Activated CD8-positive, alpha-beta T cell treated with anti-CD3 and anti-CD28 coated beads for 36 hours (primary cell): ENCODE measurements at regions of chr15 and their contacts with region 1.

Region 1: DNA sequence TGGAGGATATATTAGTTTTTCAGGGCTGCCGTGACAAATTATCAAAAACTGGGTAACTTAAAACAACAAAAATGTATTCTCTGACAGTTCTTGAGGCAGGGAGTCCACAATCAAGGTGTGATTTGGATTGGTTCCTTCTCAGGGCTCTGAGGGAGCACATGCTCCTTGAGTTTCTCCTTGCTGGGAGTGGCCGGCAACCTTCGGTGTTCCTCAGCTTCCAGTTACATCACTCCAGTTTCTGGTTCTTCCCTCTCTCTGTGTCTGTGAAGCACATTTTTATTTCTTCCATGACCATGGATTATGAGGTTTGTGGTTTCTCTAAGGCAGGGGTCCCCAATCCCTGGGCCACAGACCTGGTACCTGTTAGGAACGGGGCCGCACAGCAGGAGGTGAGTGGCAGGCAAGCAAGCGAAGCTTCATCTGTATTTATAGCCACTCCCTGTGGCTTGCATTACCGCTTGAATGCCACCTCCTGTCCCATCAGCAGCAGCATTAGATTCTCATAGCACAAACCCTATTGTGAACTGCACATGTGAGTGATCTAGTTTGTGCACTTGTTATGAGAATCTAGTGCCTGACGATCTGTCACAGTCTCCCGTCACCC is 24.3 kb downstream of the LRRC28 start:
- DNase-seq: no peak
- ATAC-seq: no peak
- H3K4me3 Mint-ChIP-seq: no peak overlapping the region
- H3K27ac Mint-ChIP-seq: no peak overlapping the region
- H3K4me1 Mint-ChIP-seq: peaks cover 21% of the 10 kb centered on the region
- H3K27me3 Mint-ChIP-seq: no peaks in the 10 kb centered on the region
- CTCF ChIP-seq: no peak

Region 2: GRCh38 chr15:99029341-99030144 is 246.1 kb before region 1 on chr15:
- CTCF ChIA-PET with region 1: no interaction called
- POLR2A ChIA-PET with region 1: no interaction called
- intact Hi-C with region 1: no loop called
- DNase-seq: no peak
- ATAC-seq: no peak
- H3K4me3 Mint-ChIP-seq: no peak overlapping the region
- H3K27ac Mint-ChIP-seq: no peak overlapping the region
- H3K4me1 Mint-ChIP-seq: no peaks in the 10 kb centered on the region
- H3K27me3 Mint-ChIP-seq: peaks cover 5% of the 10 kb centered on the region
- CTCF ChIP-seq: no peak

Region 3: DNA sequence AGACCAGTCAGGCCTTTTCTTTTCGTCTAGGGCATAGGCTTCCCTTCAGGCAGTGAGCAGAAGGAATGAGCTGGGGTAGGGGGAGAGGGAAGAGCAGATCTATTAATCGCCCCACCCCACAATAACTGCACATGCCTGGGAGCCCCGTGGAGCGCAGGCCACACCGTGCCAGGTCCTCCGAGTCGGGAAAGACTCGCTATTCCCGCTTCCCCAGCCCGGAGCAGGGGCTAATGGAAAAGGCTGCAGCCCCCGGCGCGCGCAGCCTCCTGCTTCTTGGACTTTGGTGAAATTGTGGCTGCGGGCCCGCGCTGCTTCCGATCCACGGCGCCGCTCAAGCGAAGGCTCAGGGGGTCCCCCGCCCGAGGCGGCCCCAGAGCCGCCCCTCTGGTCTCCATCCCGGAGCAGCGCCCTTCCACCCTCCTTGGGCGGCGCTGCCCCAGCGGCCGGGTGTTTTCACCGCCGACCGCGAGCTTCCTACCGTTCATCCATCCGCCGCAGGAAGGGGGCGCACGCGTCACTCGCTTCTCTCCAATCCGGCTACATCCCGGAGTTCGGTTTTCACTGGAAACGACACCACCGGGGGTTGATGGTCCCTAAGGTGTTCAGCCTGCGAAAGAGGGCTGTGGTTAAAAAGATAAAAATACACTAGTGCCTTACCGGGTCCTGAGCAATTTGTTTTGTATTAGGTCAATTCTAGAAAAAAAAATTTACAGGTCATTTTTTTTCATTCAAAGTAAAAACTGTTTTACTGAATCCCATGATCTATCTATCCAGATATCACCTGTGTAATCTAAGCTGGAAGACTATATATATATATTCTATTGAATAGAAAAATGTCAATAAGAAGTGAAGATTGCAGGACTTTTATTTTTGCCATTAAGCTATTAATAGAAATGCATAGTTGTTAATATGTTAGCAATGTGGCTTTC is 175.1 kb before region 1 on chr15:
- CTCF ChIA-PET with region 1: no interaction called
- POLR2A ChIA-PET with region 1: no interaction called
- intact Hi-C with region 1: no loop called
- DNase-seq: peak; percentile 69
- ATAC-seq: peak; percentile 38
- H3K4me3 Mint-ChIP-seq: no peak overlapping the region
- H3K27ac Mint-ChIP-seq: no peak overlapping the region
- H3K4me1 Mint-ChIP-seq: peaks cover 2% of the 10 kb centered on the region
- H3K27me3 Mint-ChIP-seq: peaks cover 35% of the 10 kb centered on the region
- CTCF ChIP-seq: peak; percentile 69

Region 4: GRCh38 chr15:99213187-99213811 is 62.3 kb before region 1 on chr15:
- CTCF ChIA-PET with region 1: no interaction called
- POLR2A ChIA-PET with region 1: no interaction called
- intact Hi-C with region 1: no loop called
- DNase-seq: peak; percentile 85
- ATAC-seq: peak; percentile 74
- H3K4me3 Mint-ChIP-seq: no peak overlapping the region
- H3K27ac Mint-ChIP-seq: no peak overlapping the region
- H3K4me1 Mint-ChIP-seq: no peaks in the 10 kb centered on the region
- H3K27me3 Mint-ChIP-seq: peaks cover 3% of the 10 kb centered on the region
- CTCF ChIP-seq: peak; percentile 92

Region 5: DNA sequence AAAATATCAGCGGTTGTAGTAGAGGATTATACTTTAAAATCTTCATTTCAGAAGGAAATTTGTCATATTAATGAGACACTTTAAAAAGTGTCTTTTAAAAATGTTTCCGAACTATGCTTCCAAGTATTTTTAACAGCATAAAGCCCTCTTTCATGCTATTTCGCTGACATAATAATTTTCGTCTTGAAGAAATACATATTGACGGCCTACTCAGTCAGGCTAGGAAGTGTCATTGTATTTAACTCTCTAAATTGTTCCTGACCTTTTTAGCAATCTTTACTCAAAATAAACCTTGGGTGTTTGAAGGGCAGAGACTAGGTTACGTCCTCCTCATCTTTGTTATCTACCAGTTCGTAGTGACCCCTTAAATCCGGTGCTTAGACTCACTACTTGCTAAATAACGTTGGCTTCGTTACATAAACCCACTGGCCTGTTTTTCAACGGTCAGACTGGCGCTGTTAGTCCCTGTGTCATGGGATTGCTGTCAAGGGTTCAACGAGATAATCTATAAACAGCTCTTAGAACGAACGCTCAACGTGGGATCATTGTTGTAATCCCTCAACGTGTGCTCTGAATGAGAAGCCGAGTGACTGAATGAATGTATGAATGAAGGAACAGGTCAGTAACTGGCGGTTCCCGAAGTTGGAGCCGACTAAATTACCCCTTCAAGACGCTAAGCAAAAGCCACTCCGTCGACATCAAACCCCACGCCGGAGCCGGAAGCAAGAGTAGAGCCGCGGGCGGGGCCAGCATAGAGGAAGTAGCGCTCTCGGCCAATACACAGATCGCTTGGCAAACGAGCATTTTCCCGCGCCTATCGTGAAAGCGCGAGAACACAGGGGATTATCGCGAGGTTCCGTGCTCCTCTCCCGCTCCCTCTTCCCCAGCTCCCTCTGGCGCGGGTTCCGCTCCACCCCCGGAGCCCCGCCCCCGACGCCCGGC is 24.9 kb before region 1 on chr15:
- CTCF ChIA-PET with region 1: interaction called, 16 read pairs
- POLR2A ChIA-PET with region 1: no interaction called
- intact Hi-C with region 1: no loop called
- DNase-seq: peak; percentile 99
- ATAC-seq: peak; percentile 99
- H3K4me3 Mint-ChIP-seq: no peak overlapping the region
- H3K27ac Mint-ChIP-seq: peak overlapping the region; percentile 92
- H3K4me1 Mint-ChIP-seq: peaks cover 26% of the 10 kb centered on the region
- H3K27me3 Mint-ChIP-seq: no peaks in the 10 kb centered on the region
- CTCF ChIP-seq: no peak

Region 6: DNA sequence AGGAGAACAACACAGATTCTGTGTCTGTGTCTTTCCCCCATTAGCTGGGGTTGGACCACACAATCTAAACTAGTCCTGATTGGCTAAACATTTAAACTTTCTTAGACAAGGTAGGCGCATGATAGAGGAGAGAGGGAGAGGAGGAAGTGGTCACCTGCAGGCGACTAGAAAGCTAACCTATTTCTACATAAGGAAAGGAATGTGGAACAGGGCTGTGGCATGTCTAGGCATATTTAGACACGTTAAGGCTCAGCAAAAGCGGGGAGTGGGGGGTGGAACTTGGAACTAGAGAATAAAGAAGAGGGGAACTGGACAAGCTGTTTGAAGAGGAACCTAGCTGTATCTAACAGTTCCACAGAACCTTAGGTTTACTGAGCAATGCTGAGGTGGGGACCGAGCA is 11.5 kb before region 1 on chr15:
- CTCF ChIA-PET with region 1: interaction called, 20 read pairs
- POLR2A ChIA-PET with region 1: no interaction called
- intact Hi-C with region 1: no loop called
- DNase-seq: no peak
- ATAC-seq: peak; percentile 17
- H3K4me3 Mint-ChIP-seq: no peak overlapping the region
- H3K27ac Mint-ChIP-seq: no peak overlapping the region
- H3K4me1 Mint-ChIP-seq: no peaks in the 10 kb centered on the region
- H3K27me3 Mint-ChIP-seq: no peaks in the 10 kb centered on the region
- CTCF ChIP-seq: no peak

Region 7: DNA sequence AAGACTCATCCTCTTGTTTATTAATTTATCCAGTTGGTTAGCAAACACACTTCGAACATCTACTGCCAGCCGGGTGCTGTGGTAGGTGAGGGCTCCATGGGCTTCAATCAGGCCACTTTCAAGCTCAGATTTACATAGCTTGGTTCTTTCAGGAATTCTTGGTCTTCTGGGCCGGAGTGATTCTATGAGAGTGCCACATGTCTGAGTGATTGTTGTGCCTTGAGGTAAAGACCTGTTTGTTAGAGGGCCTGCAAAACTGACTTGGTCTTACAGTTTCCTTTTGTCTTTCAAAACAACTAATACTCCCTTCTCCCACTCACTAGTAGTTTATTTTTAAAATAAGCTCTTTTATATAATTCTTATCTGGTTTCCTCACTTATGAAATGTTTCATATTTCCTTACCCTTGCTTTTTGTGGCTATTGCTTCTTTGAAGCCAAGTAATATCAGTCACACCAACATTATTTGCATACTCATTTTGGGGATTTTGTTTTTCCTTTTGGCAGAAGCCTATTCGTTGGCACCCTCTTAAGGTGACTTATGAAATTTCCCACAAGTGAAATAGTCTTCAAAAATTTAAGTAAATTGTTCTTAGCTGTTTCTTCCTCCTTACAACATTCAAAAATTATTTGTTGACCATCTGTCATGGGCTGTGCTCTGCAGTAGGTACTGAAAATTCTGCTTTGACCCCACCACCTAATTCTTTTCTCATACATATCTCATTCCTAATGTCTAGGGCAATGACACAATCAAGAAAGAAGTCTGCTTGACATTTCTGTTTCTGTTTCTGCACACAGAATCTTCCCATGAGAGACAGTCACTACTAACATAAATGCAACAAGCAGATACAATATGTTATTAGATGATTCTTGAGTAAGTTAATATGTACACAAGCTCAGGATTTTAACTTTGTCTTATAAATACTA is 95.8 kb after region 1 on chr15:
- CTCF ChIA-PET with region 1: interaction called, 24 read pairs
- POLR2A ChIA-PET with region 1: no interaction called
- intact Hi-C with region 1: no loop called
- DNase-seq: peak; percentile 4
- ATAC-seq: peak; percentile 84
- H3K4me3 Mint-ChIP-seq: no peak overlapping the region
- H3K27ac Mint-ChIP-seq: peak overlapping the region; percentile 74
- H3K4me1 Mint-ChIP-seq: peaks cover 22% of the 10 kb centered on the region
- H3K27me3 Mint-ChIP-seq: no peaks in the 10 kb centered on the region
- CTCF ChIP-seq: no peak

Region 8: GRCh38 chr15:99409097-99409473 is 133.5 kb after region 1 on chr15:
- CTCF ChIA-PET with region 1: interaction called, 10 read pairs
- POLR2A ChIA-PET with region 1: no interaction called
- intact Hi-C with region 1: no loop called
- DNase-seq: peak; percentile 51
- ATAC-seq: peak; percentile 74
- H3K4me3 Mint-ChIP-seq: no peak overlapping the region
- H3K27ac Mint-ChIP-seq: no peak overlapping the region
- H3K4me1 Mint-ChIP-seq: peaks cover 4% of the 10 kb centered on the region
- H3K27me3 Mint-ChIP-seq: no peaks in the 10 kb centered on the region
- CTCF ChIP-seq: no peak

Region 9: DNA sequence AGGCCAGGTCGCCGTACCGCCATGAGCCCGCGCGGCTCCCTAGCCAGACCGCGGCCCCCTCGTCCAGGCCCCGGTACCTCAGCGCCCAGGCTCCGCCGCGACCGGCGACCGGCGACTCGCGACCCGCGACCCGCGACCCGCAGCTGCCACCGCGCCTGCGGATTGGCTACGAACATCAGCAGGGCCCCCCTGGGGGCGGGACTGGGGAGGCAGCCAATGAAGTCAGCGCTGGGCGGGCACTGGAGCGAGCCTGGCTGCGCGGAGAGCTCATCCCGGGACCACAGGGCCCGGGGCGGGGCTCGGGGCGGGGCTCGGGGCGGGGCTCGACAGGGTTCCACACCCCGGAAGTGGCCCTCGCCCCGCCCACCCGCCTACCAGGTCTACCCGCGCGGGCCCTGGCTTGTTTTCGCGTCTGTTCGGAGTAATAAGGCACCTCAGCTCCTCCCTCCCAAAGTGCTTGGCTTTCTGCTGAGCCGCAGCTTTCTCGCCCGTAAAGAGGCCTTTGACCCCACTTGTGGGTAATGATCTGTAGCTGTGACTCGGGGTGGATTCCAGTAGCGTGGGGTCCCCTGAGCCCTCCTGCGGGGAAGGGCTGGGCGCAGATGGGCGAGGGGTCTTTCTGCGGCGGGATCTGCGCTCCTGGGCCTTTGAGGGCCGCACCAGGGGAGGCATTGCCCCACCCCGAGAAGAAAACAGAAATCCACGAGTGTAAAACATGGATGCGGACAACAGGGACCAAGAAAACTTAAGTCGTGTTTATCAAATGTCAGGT is 457.8 kb after region 1 on chr15 and contains the start of gene LYSMD4:
- CTCF ChIA-PET with region 1: interaction called, 18 read pairs
- POLR2A ChIA-PET with region 1: no interaction called
- intact Hi-C with region 1: no loop called
- DNase-seq: peak; percentile 99
- ATAC-seq: peak; percentile 99
- H3K4me3 Mint-ChIP-seq: peak within 1 kb of the TSS; percentile 79
- H3K27ac Mint-ChIP-seq: peak within 1 kb of the TSS; percentile 94
- H3K4me1 Mint-ChIP-seq: peaks cover 17% of the 10 kb centered on the region
- H3K27me3 Mint-ChIP-seq: no peaks in the 10 kb centered on the region
- CTCF ChIP-seq: no peak
- total RNA-seq, gene LYSMD4: 4.5 to 6.6 TPM

Region 10: DNA sequence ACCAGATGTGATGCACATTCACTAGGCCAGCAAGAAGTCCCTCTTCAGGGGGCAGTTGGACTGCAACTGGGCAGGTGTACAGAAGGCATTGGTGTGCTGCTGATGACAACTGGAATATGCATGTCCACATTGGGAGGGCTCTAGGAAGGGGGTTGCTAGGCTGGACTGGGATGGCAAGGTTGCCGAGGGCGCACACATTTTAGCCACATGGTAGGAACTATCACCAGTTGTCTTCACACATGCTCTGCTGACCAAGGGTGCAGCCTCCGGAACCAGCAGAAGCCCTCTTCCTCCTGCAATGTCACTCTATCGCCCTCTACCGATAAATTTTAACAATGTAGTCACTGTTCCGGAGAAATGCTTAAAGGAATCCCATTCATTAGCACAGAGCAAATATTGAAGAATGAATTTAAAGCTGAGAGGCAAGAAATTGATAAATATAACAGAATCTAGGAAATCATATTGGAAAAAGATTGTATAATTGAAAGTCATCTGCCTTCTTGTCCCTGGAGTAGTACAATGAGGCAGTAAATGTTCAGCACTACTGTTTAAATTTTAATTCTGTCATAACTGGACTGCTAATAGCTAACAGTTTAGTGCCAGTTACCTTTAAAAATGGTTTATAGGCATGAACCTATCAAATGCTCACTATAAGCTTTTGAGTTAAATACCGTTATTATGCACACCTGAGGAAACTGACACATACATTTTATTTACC is 480.2 kb after region 1 on chr15:
- CTCF ChIA-PET with region 1: interaction called, 42 read pairs
- POLR2A ChIA-PET with region 1: no interaction called
- intact Hi-C with region 1: no loop called
- DNase-seq: peak; percentile 41
- ATAC-seq: peak; percentile 88
- H3K4me3 Mint-ChIP-seq: no peak overlapping the region
- H3K27ac Mint-ChIP-seq: no peak overlapping the region
- H3K4me1 Mint-ChIP-seq: no peaks in the 10 kb centered on the region
- H3K27me3 Mint-ChIP-seq: peaks cover 6% of the 10 kb centered on the region
- CTCF ChIP-seq: peak; percentile 92